Sigmoid colon (tissue), 7 donors: ENCODE measurements at regions of chr5 and their contacts with region 1.

Region 1: GRCh38 chr5:157575381-157576020 is at the start of gene ADAM19:
- DNase-seq: peak; percentile 83
- H3K4me3 ChIP-seq: peak within 1 kb of the TSS; percentile 77 to 89 (median 79)
- H3K27ac ChIP-seq: peak within 1 kb of the TSS; percentile 91 to 95 (median 94)
- H3K4me1 ChIP-seq: peaks cover 0 to 45% (median 34%) of the 10 kb centered on the region in 4 donors
- H3K27me3 ChIP-seq: no peaks in the 10 kb centered on the region
- CTCF ChIP-seq: peak; percentile 9 to 52 (median 32)
- EP300 ChIP-seq: no peak
- POLR2A ChIP-seq: peak in 1 of 2 donors; percentile 62
- total RNA-seq, gene ADAM19: 18.8 to 53.2 (median 35.0) TPM

Region 2: GRCh38 chr5:157366741-157367674 is 208.5 kb before region 1 on chr5:
- intact Hi-C with region 1: loop called (anchors 5 kb)
- DNase-seq: peak; percentile 82
- H3K4me3 ChIP-seq: no peak overlapping the region
- H3K27ac ChIP-seq: peak overlapping the region in 3 of 4 donors; percentile 84 to 87 (median 86)
- H3K4me1 ChIP-seq: peaks cover 0 to 69% (median 47%) of the 10 kb centered on the region in 4 donors
- H3K27me3 ChIP-seq: no peaks in the 10 kb centered on the region
- CTCF ChIP-seq: peak; percentile 58 to 71 (median 66)
- EP300 ChIP-seq: no peak
- POLR2A ChIP-seq: no peak

Region 3: GRCh38 chr5:157451806-157452205 is 123.7 kb before region 1 on chr5:
- intact Hi-C with region 1: loop called (anchors 5 kb)
- DNase-seq: no peak
- H3K4me3 ChIP-seq: no peak overlapping the region
- H3K27ac ChIP-seq: peak overlapping the region in 1 of 4 donors; percentile 83
- H3K4me1 ChIP-seq: peaks cover 0 to 34% (median 17%) of the 10 kb centered on the region in 4 donors
- H3K27me3 ChIP-seq: no peaks in the 10 kb centered on the region
- CTCF ChIP-seq: no peak
- EP300 ChIP-seq: no peak
- POLR2A ChIP-seq: no peak

Region 4: GRCh38 chr5:157516626-157517325 is 58.7 kb before region 1 on chr5:
- intact Hi-C with region 1: loop called (anchors 2 kb)
- DNase-seq: peak; percentile 88
- H3K4me3 ChIP-seq: no peak overlapping the region
- H3K27ac ChIP-seq: peak overlapping the region; percentile 77 to 95 (median 84)
- H3K4me1 ChIP-seq: peaks cover 0 to 64% (median 61%) of the 10 kb centered on the region in 4 donors
- H3K27me3 ChIP-seq: no peaks in the 10 kb centered on the region
- CTCF ChIP-seq: no peak
- EP300 ChIP-seq: peak in 3 of 4 donors; percentile 38 to 74 (median 60)
- POLR2A ChIP-seq: no peak

Region 5: GRCh38 chr5:157592594-157592993 is 17.1 kb after region 1 on chr5:
- intact Hi-C with region 1: no loop called
- DNase-seq: no peak
- H3K4me3 ChIP-seq: no peak overlapping the region
- H3K27ac ChIP-seq: no peak overlapping the region
- H3K4me1 ChIP-seq: no peaks in the 10 kb centered on the region
- H3K27me3 ChIP-seq: no peaks in the 10 kb centered on the region
- CTCF ChIP-seq: no peak
- EP300 ChIP-seq: no peak
- POLR2A ChIP-seq: no peak

Region 6: GRCh38 chr5:157718519-157718918 is 143.0 kb after region 1 on chr5:
- intact Hi-C with region 1: loop called (anchors 5 kb)
- DNase-seq: no peak
- H3K4me3 ChIP-seq: no peak overlapping the region
- H3K27ac ChIP-seq: peak overlapping the region in 1 of 4 donors; percentile 32
- H3K4me1 ChIP-seq: peaks cover 0 to 13% (median 10%) of the 10 kb centered on the region in 4 donors
- H3K27me3 ChIP-seq: no peaks in the 10 kb centered on the region
- CTCF ChIP-seq: peak; percentile 41 to 80 (median 68)
- EP300 ChIP-seq: no peak
- POLR2A ChIP-seq: no peak